ENCODE measurements at regions of chr19 and their contacts with region 1.

Region 1: DNA sequence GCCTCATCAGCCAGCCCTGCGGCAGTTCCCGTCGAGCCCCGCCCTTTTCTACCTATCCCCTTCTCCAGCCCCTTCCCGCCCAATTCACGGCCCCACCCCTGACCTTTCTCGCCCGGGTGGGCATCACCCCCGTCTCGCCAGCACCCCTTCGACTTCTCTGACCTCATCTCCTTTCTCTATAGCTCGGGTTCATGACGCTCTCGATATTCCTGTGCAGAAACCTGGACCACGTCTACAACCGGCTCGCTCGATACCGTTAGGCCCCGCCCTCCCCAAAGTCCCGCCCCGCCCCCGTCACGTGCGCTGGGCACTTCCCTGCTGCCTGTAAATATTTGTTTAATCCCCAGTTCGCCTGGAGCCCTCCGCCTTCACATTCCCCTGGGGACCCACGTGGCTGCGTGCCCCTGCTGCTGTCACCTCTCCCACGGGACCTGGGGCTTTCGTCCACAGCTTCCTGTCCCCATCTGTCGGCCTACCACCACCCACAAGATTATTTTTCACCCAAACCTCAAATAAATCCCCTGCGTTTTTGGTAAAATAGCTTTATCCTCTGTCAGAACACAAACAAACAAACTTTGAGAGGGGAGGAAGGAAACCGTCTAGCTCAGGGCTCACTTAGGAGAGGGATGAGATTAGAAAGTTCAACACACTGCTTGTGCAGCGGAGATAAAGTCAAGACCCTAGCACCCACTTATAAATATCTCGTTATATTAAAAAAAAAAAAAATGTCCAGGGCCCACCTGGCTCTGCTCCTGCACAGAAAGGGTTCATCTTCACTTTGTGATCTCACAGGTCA is 5.1 kb downstream of the CD37 start:
- DNase-seq: peak; percentile 98
- ATAC-seq: peak; percentile 71
- H3K4me3 ChIP-seq: peak overlapping the region in 4 of 5 experiments; percentile 94 to 98 (median 98)
- H3K4me3 Mint-ChIP-seq: peak overlapping the region; percentile 80
- H3K27ac ChIP-seq: peak overlapping the region; percentile 89 to 93
- H3K27ac Mint-ChIP-seq: peak overlapping the region; percentile 95
- H3K4me1 ChIP-seq: peaks cover 52 to 77% of the 10 kb centered on the region in 2 donors
- H3K4me1 Mint-ChIP-seq: peaks cover 75% of the 10 kb centered on the region
- H3K27me3 ChIP-seq: no peaks in the 10 kb centered on the region
- H3K27me3 Mint-ChIP-seq: no peaks in the 10 kb centered on the region
- CTCF ChIP-seq: no peak

Region 2: GRCh38 chr19:49272184-49272583 is 68.1 kb before region 1 on chr19:
- CTCF ChIA-PET with region 1: interaction called, 4 read pairs
- POLR2A ChIA-PET with region 1: no interaction called
- intact Hi-C with region 1: loop called (anchors 2 kb)
- DNase-seq: no peak
- ATAC-seq: no peak
- H3K4me3 ChIP-seq: no peak overlapping the region
- H3K4me3 Mint-ChIP-seq: no peak overlapping the region
- H3K27ac ChIP-seq: no peak overlapping the region
- H3K27ac Mint-ChIP-seq: no peak overlapping the region
- H3K4me1 ChIP-seq: no peaks in the 10 kb centered on the region
- H3K4me1 Mint-ChIP-seq: no peaks in the 10 kb centered on the region
- H3K27me3 ChIP-seq: no peaks in the 10 kb centered on the region
- H3K27me3 Mint-ChIP-seq: peaks cover 13% of the 10 kb centered on the region
- CTCF ChIP-seq: no peak

Region 3: GRCh38 chr19:49326165-49326704 is 14.0 kb before region 1 on chr19:
- CTCF ChIA-PET with region 1: interaction called, 25 read pairs
- POLR2A ChIA-PET with region 1: interaction called, 72 read pairs
- intact Hi-C with region 1: loop called (anchors 1 kb)
- DNase-seq: peak; percentile 76
- ATAC-seq: peak; percentile 60
- H3K4me3 ChIP-seq: peak overlapping the region in 2 of 5 experiments; percentile 17 to 50
- H3K4me3 Mint-ChIP-seq: peak overlapping the region; percentile 77
- H3K27ac ChIP-seq: peak overlapping the region; percentile 69 to 93
- H3K27ac Mint-ChIP-seq: peak overlapping the region; percentile 91
- H3K4me1 ChIP-seq: peaks cover 74 to 80% of the 10 kb centered on the region in 2 donors
- H3K4me1 Mint-ChIP-seq: peaks cover 71% of the 10 kb centered on the region
- H3K27me3 ChIP-seq: no peaks in the 10 kb centered on the region
- H3K27me3 Mint-ChIP-seq: no peaks in the 10 kb centered on the region
- CTCF ChIP-seq: no peak

Region 4: DNA sequence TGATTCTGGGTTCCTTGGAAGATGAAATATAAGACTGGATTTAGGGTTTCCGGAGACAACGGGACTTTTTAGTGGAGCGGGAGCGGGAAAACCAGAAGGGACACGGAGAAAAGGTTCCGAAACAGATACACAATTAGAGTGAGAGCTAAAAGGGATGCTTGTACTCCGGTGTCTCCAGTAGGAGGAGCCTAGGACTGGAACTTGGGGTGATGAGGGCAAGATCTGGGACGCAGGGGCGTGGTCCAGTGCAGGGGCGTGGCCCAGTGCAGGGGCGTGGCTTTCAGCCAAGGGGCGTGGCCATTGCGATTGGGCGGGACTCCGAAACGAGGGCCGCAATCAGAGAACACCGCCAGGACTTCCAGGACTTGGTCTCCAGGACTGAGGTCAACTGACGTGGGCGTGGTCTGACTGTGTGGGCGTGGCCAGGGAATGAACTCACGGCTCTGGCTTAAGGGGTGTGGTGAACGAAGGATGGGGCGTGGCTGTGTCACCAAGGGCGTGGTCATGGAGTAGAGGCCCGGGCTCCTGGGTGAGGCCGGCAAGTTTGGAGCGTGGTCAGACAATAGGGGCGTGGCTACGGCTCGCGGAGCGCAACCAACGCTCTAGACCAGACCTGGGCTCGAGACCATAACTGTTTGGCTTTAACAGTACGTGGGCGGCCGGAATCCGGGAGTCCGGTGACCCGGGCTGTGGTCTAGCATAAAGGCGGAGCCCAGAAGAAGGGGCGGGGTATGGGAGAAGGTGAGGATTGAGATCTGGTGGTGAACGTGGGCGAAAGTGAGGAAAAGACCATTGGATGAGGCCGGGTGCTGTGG is 23.2 kb after region 1 on chr19 and contains the start of gene DKKL1:
- CTCF ChIA-PET with region 1: interaction called, 6 read pairs
- POLR2A ChIA-PET with region 1: interaction called, 18 read pairs
- intact Hi-C with region 1: loop called (anchors 1 kb)
- DNase-seq: peak; percentile 88
- ATAC-seq: peak; percentile 80
- H3K4me3 ChIP-seq: peak within 1 kb of the TSS in 4 of 5 experiments; percentile 45 to 83 (median 58)
- H3K4me3 Mint-ChIP-seq: peak within 1 kb of the TSS; percentile 35
- H3K27ac ChIP-seq: peak within 1 kb of the TSS in 1 of 2 donors; percentile 6
- H3K27ac Mint-ChIP-seq: no peak within 1 kb of the TSS
- H3K4me1 ChIP-seq: peaks cover 46 to 55% of the 10 kb centered on the region in 2 donors
- H3K4me1 Mint-ChIP-seq: peaks cover 37% of the 10 kb centered on the region
- H3K27me3 ChIP-seq: peaks cover 0 to 10% (median 3%) of the 10 kb centered on the region in 4 experiments
- H3K27me3 Mint-ChIP-seq: no peaks in the 10 kb centered on the region
- CTCF ChIP-seq: no peak
- total RNA-seq, gene DKKL1: 0.68 and 1.2 TPM in 2 replicates

Region 5: GRCh38 chr19:49443366-49444099 is 103.3 kb after region 1 on chr19:
- CTCF ChIA-PET with region 1: interaction called, 3 read pairs
- POLR2A ChIA-PET with region 1: interaction called, 20 read pairs
- intact Hi-C with region 1: loop called (anchors 1 kb)
- DNase-seq: peak; percentile 98
- ATAC-seq: peak; percentile 85
- H3K4me3 ChIP-seq: peak overlapping the region; percentile 12 to 80 (median 71)
- H3K4me3 Mint-ChIP-seq: peak overlapping the region; percentile 93
- H3K27ac ChIP-seq: peak overlapping the region; percentile 65 to 72
- H3K27ac Mint-ChIP-seq: peak overlapping the region; percentile 95
- H3K4me1 ChIP-seq: peaks cover 18 to 31% of the 10 kb centered on the region in 2 donors
- H3K4me1 Mint-ChIP-seq: peaks cover 35% of the 10 kb centered on the region
- H3K27me3 ChIP-seq: peaks cover 2 to 39% (median 34%) of the 10 kb centered on the region in 4 experiments
- H3K27me3 Mint-ChIP-seq: peaks cover 37% of the 10 kb centered on the region
- CTCF ChIP-seq: peak; percentile 89

Region 6: DNA sequence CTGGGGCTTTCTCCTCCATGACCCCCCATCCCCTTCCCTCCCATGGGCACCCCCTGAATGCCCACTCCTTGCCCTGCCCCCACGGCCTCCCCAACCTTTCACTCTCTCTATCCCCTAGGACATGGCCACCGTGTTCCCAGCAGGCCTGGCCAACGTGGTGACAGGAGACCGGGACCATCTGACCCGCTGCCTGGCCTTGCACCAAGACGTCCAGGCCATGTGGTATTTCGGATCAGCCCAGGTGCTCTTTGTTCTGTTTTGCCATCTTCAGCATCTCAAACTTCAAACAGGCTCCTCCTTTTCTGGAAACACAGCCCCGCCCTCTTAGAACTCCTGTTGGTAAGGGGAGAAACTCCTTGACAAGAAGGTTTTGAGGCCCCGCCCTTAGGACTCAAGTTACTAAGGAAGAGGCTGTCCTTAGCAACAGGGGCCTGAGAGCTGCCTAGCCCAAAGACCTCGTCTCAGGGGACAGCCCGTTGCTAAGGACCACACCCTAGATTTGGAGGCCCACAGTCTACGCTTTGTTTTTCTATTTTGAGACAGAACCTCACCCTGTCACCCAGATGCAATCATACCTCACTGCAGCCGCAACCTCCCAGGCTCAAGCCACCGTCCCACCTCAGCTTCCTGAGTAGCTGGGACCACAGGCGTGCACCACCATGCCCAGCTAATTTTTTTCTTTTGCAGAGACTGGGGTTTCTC is 128.6 kb after region 1 on chr19:
- CTCF ChIA-PET with region 1: interaction called, 8 read pairs
- POLR2A ChIA-PET with region 1: interaction called, 17 read pairs
- intact Hi-C with region 1: loop called (anchors 1 kb)
- DNase-seq: peak; percentile 98
- ATAC-seq: peak; percentile 75
- H3K4me3 ChIP-seq: peak overlapping the region in 1 of 5 experiments; percentile 18
- H3K4me3 Mint-ChIP-seq: peak overlapping the region; percentile 74
- H3K27ac ChIP-seq: peak overlapping the region; percentile 96 to 98
- H3K27ac Mint-ChIP-seq: peak overlapping the region; percentile 98
- H3K4me1 ChIP-seq: peaks cover 44 to 57% of the 10 kb centered on the region in 2 donors
- H3K4me1 Mint-ChIP-seq: peaks cover 41% of the 10 kb centered on the region
- H3K27me3 ChIP-seq: no peaks in the 10 kb centered on the region
- H3K27me3 Mint-ChIP-seq: no peaks in the 10 kb centered on the region
- CTCF ChIP-seq: no peak